Activated T-helper 2 cell treated with anti-CD3 and anti-CD28 coated beads, Interferon-gamma antibody, Interleukin-2, Interleukin-4, amounts not matched to agents 10 μg/mL and 5 μg/mL and 100 μg/mL, durations not matched to agents 14 hours and 24 hours and 36 hours (primary cell): ENCODE measurements at regions of chr15 and their contacts with region 1.

Region 1: DNA sequence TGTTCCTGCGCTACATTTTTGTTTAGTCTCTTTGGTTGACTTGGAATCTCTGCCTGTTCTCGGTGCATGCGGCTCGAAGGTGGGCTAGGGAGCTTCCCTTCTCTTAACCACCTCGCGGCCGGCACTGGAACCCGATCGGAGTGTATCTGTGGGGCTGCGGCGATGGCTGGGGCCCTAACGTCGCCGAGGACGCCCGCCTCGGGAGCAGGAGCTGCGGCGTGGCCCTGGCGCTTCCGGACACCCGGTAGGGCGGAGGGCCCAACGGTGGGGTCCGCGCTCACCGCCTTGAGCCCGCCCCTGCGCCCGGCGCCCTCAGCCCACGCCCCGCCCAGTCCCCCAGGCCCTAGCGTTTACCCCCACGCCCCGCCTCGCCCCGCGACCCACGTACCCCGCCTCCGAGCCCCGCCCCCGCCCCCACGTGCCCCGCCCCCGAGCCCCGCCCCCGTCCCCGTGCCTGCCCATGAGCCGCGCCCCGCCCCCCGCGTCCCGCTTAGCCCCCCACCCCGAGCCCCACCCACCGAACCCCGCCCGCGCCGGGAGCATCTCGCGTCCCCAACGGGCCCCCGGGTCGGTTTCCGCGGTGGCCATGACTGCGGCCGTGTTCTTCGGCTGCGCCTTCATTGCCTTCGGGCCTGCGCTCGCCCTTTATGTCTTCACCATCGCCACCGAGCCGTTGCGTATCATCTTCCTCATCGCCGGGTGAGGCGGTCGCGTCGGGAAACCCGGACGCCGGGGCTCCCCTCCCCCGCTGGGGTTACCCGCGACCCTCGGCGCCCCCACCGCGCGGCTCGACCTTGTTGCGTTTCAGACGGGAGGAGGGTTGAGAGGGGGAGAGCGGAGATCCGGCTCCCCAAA is at the start of gene APH1B:
- DNase-seq: peak; percentile 77
- H3K4me3 Mint-ChIP-seq: peak within 1 kb of the TSS; percentile 87
- H3K27ac Mint-ChIP-seq: peak within 1 kb of the TSS; percentile 85
- H3K4me1 Mint-ChIP-seq: peaks cover 30% of the 10 kb centered on the region
- H3K27me3 Mint-ChIP-seq: no peaks in the 10 kb centered on the region
- total RNA-seq, gene APH1B: 9.5 and 9.8 TPM in 2 replicates

Region 2: GRCh38 chr15:63122002-63122893 is 155.0 kb before region 1 on chr15:
- intact Hi-C with region 1: loop called (anchors 1 kb)
- DNase-seq: peak; percentile 77
- H3K4me3 Mint-ChIP-seq: peak overlapping the region; percentile 91
- H3K27ac Mint-ChIP-seq: peak overlapping the region; percentile 47
- H3K4me1 Mint-ChIP-seq: peaks cover 8% of the 10 kb centered on the region
- H3K27me3 Mint-ChIP-seq: peaks cover 1% of the 10 kb centered on the region

Region 3: DNA sequence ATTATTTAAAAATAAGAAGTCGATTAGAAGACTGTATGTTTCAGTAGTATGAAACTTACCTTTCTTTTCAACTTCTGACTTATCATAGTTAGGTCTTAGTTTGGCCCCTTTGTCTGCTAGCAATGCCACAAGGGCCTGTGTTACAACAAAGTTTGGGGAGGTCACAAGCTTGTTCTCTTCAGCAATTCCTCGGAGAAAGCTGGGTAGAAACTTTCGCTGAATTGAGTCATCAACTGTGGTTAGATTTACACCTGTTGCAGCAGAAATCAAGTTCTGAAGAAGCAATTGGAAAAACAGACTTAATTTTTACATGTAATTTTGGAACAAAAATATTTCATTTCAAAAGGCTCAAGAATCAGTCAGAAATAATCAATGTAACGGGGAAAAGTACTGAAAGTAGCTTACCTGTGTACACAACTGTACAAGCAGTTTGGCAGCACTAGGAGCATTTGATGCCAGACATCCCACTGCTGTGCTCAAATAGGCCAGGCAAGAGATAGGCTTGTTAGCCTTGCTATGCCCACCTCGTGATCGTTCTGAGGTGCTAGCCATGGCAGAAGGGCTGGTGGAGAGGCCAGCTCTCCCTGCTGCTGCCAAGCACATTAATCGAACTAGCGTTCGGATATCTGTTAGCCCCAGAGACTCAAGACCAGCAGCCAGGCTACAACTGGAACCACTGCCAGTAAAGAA is 378.6 kb after region 1 on chr15:
- intact Hi-C with region 1: no loop called
- DNase-seq: no peak
- H3K4me3 Mint-ChIP-seq: no peak overlapping the region
- H3K27ac Mint-ChIP-seq: no peak overlapping the region
- H3K4me1 Mint-ChIP-seq: peaks cover 12% of the 10 kb centered on the region
- H3K27me3 Mint-ChIP-seq: no peaks in the 10 kb centered on the region